Prostate gland (tissue), 2 donors: ENCODE measurements at regions of chr1 and their contacts with region 1.

Region 1: GRCh38 chr1:51535006-51535592 is 16.0 kb upstream of the EPS15 start:
- DNase-seq: peak; percentile 36
- H3K4me3 ChIP-seq: no peak overlapping the region
- H3K27ac ChIP-seq: no peak overlapping the region
- H3K4me1 ChIP-seq: no peaks in the 10 kb centered on the region
- H3K27me3 ChIP-seq: no peaks in the 10 kb centered on the region
- CTCF ChIP-seq: peak in 3 of 4 experiments; percentile 51 to 81 (median 72)
- POLR2A ChIP-seq: no peak

Region 2: DNA sequence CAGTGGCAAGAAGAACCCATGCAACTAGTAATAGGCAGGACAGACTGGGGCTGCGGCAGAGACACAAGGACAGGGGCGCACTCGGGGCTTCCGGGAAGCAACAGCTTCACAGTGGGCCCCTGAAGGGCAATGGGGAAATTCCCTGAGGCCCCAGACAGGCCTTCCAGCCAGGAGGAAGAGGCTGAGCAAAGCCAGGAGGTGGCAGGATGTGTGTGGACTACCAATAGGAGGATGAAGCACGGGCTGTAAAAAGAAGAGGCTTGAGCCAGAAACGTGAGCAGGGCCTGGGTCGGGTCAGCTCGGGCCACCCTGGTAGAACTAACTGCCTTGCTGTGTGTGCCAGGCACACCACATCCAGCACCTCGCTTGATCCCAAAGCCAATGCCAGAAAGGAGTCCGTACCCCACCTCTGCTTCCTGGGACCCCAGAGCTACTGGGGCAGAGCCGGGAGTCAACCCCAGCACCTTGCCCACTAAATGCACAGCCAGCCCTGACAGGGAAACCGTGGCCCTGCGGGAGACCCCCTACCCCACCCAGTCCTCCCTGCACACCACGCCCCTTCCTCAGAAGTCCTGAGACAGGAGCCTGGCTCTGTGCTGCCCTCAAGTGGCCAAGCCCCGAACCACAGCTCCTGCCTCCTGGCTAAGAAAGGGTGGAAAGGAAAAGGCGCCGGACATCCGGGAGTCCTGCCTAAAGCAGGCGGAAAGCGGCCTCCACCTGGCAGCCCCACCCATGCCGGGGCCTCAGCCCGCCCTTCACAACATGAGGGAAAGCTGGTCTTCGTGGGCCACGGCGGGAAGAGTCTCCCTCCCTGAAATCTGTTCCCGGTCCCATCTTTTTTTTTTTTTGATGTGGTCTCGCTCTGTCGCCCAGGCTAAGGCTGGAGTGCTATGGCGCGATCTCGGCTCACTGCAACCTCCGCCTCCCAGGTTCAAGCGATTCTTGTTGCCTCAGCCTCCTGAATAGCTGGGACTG is 238.4 kb before region 1 on chr1:
- intact Hi-C with region 1: loop called (anchors 10 kb)
- DNase-seq: peak; percentile 78
- H3K4me3 ChIP-seq: peak overlapping the region; percentile 20 to 21
- H3K27ac ChIP-seq: peak overlapping the region; percentile 17 to 21
- H3K4me1 ChIP-seq: no peaks in the 10 kb centered on the region
- H3K27me3 ChIP-seq: no peaks in the 10 kb centered on the region
- CTCF ChIP-seq: peak; percentile 90 to 93 (median 92)
- POLR2A ChIP-seq: no peak

Region 3: GRCh38 chr1:51331206-51332100 is 203.6 kb before region 1 on chr1:
- intact Hi-C with region 1: loop called (anchors 10 kb)
- DNase-seq: peak; percentile 49
- H3K4me3 ChIP-seq: peak overlapping the region in 1 of 2 donors; percentile 58
- H3K27ac ChIP-seq: peak overlapping the region; percentile 78 to 88
- H3K4me1 ChIP-seq: no peaks in the 10 kb centered on the region
- H3K27me3 ChIP-seq: no peaks in the 10 kb centered on the region
- CTCF ChIP-seq: no peak
- POLR2A ChIP-seq: no peak

Region 4: GRCh38 chr1:51600529-51600928 is 65.4 kb after region 1 on chr1:
- intact Hi-C with region 1: no loop called
- DNase-seq: no peak
- H3K4me3 ChIP-seq: no peak overlapping the region
- H3K27ac ChIP-seq: no peak overlapping the region
- H3K4me1 ChIP-seq: no peaks in the 10 kb centered on the region
- H3K27me3 ChIP-seq: no peaks in the 10 kb centered on the region
- CTCF ChIP-seq: no peak
- POLR2A ChIP-seq: no peak